ENCODE measurements at regions of chr15 and their contacts with region 1.

Region 1: GRCh38 chr15:50940506-50940905 is 32.0 kb downstream of the AP4E1 start:
- DNase-seq: no peak
- H3K4me3 ChIP-seq: no peak overlapping the region
- H3K27ac ChIP-seq: no peak overlapping the region
- H3K4me1 ChIP-seq: no peaks in the 10 kb centered on the region
- H3K27me3 ChIP-seq: no peaks in the 10 kb centered on the region
- CTCF ChIP-seq: no peak
- POLR2A ChIP-seq: no peak

Region 2: GRCh38 chr15:50907601-50908209 is 32.8 kb before region 1 on chr15:
- intact Hi-C with region 1: no loop called
- DNase-seq: no peak
- H3K4me3 ChIP-seq: peak overlapping the region; percentile 75 to 98 (median 84)
- H3K27ac ChIP-seq: peak overlapping the region; percentile 94 to 98 (median 97)
- H3K4me1 ChIP-seq: peaks cover 16 to 58% (median 47%) of the 10 kb centered on the region in 6 donors
- H3K27me3 ChIP-seq: no peaks in the 10 kb centered on the region
- CTCF ChIP-seq: no peak
- POLR2A ChIP-seq: no peak

Region 3: GRCh38 chr15:50996641-50997040 is 56.1 kb after region 1 on chr15:
- intact Hi-C with region 1: loop called (anchors 10 kb)
- DNase-seq: no peak
- H3K4me3 ChIP-seq: no peak overlapping the region
- H3K27ac ChIP-seq: no peak overlapping the region
- H3K4me1 ChIP-seq: no peaks in the 10 kb centered on the region
- H3K27me3 ChIP-seq: no peaks in the 10 kb centered on the region
- CTCF ChIP-seq: no peak
- POLR2A ChIP-seq: no peak

Region 4: GRCh38 chr15:51223782-51224229 is 283.3 kb after region 1 on chr15:
- intact Hi-C with region 1: loop called (anchors 5 kb)
- DNase-seq: no peak
- H3K4me3 ChIP-seq: no peak overlapping the region
- H3K27ac ChIP-seq: peak overlapping the region in 5 of 8 donors; percentile 29 to 78 (median 58)
- H3K4me1 ChIP-seq: peaks cover 0 to 46% (median 3%) of the 10 kb centered on the region in 6 donors
- H3K27me3 ChIP-seq: no peaks in the 10 kb centered on the region
- CTCF ChIP-seq: no peak
- POLR2A ChIP-seq: no peak

Measured in spleen (tissue), 13 donors.